K562 (cell line): ENCODE measurements at regions of chr5 and their contacts with region 1.

Region 1: GRCh38 chr5:6176102-6176693 is 202.1 kb downstream of the MED10 start:
- DNase-seq: no peak
- ATAC-seq: no peak; the same call in 2 of the 3 replicates
- H3K4me3 ChIP-seq: no peak overlapping the region
- H3K27ac ChIP-seq: no peak overlapping the region
- H3K4me1 ChIP-seq: no peaks in the 10 kb centered on the region
- H3K27me3 ChIP-seq: 0 out of 5 replicates have a peak, but pooled peaks cover under 1 to 3% of the 10 kb centered on the region in 2 experiments
- CTCF ChIP-seq: no peak
- EP300 ChIP-seq: no peak
- POLR2A ChIP-seq: no peak
- RAD21 ChIP-seq: no peak

Region 2: DNA sequence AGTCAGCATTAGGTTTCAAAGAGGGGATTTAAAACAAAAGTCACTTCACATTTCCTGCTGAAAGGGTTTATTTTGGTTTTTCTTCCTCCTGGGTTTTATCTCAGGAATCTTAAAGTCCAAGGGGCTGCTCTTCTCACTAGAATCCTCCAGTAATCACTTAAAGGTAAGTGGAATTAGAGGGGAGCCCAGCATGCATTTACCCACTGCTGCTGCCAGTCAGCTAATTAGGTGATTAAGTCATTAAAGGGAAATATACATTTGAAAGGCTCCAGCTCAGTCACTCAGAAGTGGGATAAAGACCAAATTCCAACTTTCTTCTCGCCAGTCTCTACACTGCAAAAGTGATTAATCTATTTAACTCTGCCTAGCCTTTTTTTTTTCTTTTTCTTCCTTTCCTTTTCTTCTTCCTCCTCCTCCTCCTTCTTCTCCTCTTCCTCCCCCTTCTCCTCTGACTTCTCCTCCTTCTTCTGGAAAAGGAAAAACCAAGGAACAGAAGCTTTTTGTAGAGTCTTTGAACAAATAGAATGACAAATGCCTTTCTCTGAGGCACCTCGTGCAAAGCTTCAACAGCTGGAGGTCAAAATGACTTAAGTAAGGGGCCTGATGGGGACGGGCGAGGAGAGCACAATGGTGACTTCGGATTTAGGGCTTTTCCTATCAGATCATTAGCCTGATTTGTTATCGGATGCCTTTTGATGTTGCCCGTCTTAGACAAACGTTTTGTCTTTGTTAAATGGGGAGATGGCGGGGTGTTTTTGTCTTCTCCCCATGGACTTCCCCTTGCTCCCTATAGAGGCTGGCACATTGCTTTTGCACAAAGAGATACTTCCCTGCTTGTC is 1963.0 kb before region 1 on chr5:
- CTCF ChIA-PET with region 1: no interaction called
- POLR2A ChIA-PET with region 1: no interaction called
- in situ Hi-C with region 1: loop called (anchors 10 kb)
- intact Hi-C with region 1: no loop called
- DNase-seq: no peak
- ATAC-seq: no peak
- H3K4me3 ChIP-seq: no peak overlapping the region
- H3K27ac ChIP-seq: no peak overlapping the region
- H3K4me1 ChIP-seq: no peaks in the 10 kb centered on the region
- H3K27me3 ChIP-seq: no peaks in the 10 kb centered on the region
- CTCF ChIP-seq: no peak
- EP300 ChIP-seq: no peak
- POLR2A ChIP-seq: no peak
- RAD21 ChIP-seq: no peak

Region 3: DNA sequence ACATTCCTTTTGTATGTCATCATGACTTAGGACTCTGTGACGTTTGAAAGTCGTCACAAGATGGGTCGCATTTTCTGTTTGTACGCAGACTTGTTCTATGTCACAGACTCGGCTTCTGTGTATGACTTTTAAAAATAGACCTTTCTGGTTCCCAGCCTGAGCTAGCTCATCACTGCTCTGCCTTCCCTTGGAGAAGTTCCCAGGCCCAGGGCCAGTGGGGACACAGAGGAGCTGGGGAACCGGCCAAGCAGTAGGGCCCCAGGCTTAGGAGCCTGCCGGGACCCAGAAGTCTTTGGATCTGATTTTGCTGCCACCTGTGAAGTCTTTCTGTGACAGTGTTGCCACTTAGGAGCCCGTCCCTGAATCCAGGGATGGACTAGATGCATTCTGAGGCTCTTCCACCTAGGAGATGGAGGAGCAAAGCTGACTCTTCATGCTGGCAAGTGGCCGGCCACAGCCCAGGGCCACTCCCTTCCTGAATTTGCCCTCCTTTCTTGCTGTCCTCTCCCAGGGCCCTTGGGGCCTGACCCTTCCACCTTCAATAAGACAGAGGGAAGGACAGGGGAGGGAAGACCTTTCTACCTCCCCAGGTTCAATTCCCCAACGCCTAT is 254.3 kb after region 1 on chr5:
- CTCF ChIA-PET with region 1: no interaction called
- POLR2A ChIA-PET with region 1: no interaction called
- in situ Hi-C with region 1: no loop called
- intact Hi-C with region 1: no loop called
- DNase-seq: no peak
- ATAC-seq: no peak
- H3K4me3 ChIP-seq: no peak overlapping the region
- H3K27ac ChIP-seq: no peak overlapping the region
- H3K4me1 ChIP-seq: no peaks in the 10 kb centered on the region
- H3K27me3 ChIP-seq: peaks cover 20 to 42% of the 10 kb centered on the region in 2 experiments
- CTCF ChIP-seq: no peak
- EP300 ChIP-seq: no peak
- POLR2A ChIP-seq: no peak
- RAD21 ChIP-seq: no peak